ENCODE measurements at regions of chr4 and their contacts with region 1.

Region 1: DNA sequence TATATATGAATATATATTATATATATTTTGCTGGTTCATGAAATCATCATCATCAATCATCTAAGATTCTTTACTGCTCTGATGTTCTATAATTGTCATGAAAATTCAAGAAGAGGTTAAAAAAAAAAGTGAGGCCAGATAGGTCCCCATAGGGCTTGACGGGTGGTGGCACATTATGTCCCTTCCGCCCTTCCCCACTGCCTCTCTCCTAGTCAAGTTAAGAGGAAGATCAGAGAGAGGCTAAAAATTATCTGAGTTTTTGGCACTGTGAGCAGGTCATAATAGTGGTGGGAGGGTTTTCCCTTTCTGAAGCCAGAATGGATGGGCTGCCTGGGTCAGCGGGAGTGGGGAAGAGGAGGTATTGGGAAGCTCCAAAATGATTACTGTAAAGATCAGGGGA is 5.4 kb downstream of the SYNPO2 start:
- DNase-seq: no peak
- ATAC-seq: no peak

Region 2: DNA sequence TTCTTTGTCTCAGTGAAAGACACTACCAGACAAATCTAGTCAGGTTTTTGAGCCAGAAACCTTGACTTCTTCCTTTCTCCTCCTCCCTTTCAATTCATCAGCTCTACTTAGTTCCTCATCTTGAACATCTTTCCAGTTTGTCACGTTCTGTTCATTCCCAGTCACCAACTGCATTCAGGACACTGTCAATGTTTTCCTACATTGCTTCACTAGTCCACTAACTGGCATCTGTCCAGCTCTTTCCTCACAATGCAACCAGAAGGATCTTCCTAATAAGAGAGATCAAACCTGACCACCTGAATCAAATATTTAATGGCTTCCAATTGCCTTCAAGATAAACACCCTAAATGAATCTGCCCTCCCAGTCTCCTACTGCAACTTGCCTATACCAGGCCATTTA is 47.1 kb after region 1 on chr4:
- intact Hi-C with region 1: no loop called
- DNase-seq: no peak
- ATAC-seq: no peak

Region 3: DNA sequence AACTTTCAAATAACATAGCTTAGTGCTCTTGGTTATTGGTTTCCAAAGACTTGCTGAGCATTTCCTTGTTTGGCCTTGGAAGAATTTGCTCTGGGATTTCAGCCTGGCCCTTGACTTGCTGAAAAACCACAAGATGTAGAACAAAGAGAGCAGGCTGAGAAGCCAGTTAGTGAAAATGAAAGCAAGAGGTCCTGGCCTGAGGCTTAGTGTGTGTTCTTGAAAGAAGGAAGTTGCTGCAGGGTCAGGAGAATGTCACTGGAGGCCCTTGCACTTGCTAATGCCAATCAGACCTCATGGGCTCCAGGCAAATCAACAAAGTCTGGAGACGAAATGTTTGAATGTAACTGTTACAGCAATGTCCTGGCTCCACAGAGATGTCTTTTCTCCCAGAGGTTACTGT is 74.0 kb after region 1 on chr4:
- intact Hi-C with region 1: loop called in 1 of 2 experiments (anchors 5 kb)
- DNase-seq: peak; percentile 27 to 71
- ATAC-seq: peak; percentile 85

Measured in left colon (tissue), 2 donors.